Dorsolateral prefrontal cortex (tissue), 120 donors: ENCODE measurements at regions of chr1 and their contacts with region 1.

Region 1: DNA sequence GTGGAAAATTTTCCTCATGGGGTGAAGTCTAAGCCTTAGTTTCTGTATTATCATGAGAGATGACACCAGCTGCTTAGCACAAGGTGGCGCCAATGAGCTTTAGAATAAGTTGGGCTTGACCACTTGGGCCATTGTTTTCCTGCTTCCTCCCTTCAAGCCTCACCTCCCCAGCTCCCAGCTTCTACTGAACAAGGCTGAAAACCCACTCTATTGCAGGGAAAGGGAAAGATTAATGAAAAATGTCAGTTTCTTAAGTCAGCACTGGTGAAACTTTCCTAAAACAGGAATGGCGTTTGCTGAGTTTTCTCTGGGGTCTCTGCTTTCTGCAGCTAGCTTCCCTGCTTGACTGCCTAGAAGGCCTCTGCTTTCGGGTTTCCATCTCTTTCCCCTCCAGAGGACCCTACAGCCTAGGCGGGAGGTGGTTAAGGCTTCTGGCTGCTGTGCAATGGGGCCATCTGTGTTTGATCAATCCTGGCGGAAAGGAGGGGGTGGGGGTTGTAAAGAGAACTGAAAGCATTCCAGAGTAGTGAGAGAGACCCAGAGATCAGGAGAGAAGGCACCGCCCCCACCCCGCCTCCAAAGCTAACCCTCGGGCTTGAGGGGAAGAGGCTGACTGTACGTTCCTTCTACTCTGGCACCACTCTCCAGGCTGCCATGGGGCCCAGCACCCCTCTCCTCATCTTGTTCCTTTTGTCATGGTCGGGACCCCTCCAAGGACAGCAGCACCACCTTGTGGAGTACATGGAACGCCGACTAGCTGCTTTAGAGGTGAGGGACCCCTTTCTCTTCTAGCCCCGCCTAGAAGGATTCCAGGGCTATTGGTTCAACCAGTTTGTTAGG is at the start of gene OLFML3:
- DNase-seq: peak; percentile 54 to 93 (median 77)
- H3K4me3 ChIP-seq: peak within 1 kb of the TSS in 45 of 59 donors; percentile 0 to 52 (median 32)
- H3K27ac ChIP-seq: peak within 1 kb of the TSS in 29 of 59 donors; percentile 8 to 71 (median 41)
- H3K27me3 ChIP-seq: no peaks in the 10 kb centered on the region
- CTCF ChIP-seq: peak; percentile 51 to 84 (median 76)
- total RNA-seq, gene OLFML3: 0.64 to 13.6 (median 5.2) TPM

Region 2: DNA sequence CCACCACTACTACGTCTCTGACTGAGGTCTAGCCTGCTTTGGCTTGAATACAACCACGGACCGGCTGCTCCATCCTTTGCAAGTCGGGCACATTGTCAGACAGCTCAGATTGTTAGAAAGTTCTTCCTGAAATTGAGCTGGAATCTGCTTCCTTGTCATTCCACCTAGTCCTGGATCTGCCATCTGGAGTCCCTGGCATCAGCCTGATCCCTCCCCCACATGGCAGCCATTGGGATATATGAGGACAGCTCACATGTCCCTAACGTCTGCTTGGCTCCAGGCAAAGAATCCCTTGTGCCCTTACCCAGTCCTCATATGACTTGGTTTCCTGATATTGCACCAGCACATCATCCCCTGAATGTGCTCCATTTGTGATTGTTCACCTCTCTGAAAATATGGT is 230.9 kb after region 1 on chr1:
- intact Hi-C with region 1: loop called in 1 of 2 experiments (anchors 5 kb)
- DNase-seq: peak in 2 of 10 donors; percentile 18 to 76
- H3K4me3 ChIP-seq: no peak overlapping the region
- H3K27ac ChIP-seq: no peak overlapping the region
- H3K27me3 ChIP-seq: peaks cover 0 to 5% (median 0%) of the 10 kb centered on the region in 45 donors
- CTCF ChIP-seq: no peak

Region 3: GRCh38 chr1:114282751-114283403 is 303.8 kb after region 1 on chr1:
- intact Hi-C with region 1: loop called (anchors 2 kb)
- DNase-seq: peak; percentile 73 to 93 (median 83)
- H3K4me3 ChIP-seq: no peak overlapping the region
- H3K27ac ChIP-seq: no peak overlapping the region
- H3K27me3 ChIP-seq: no peaks in the 10 kb centered on the region
- CTCF ChIP-seq: peak; percentile 43 to 90 (median 83)

Region 4: DNA sequence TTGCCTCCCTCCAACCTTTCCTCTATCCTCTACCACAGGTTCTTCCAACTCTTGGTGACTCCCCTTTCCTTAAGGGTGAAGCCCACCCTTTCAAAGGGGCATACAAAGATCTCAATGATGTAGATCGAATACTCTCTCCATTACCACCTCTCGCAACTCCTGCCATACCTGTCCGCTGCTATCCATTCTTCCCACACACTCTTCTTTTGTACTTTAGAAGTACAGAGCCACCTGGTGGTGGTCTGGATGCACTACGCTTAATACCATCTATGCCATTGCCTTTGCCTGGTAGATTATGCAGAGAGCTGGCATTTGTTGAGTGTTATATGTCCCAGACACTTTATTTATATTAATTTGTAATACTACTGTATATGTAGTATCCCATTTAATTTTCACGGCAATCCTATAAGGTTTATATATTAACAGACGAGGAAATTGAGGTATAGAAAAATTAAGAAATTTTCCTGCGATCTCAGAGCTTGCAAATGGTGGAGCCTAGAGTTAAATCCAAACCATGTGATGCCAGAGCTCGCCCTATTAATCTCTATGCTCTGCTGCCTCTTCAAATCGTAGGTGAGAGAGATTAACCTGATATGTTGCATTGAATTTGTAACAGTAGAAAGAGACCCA is 1073.5 kb after region 1 on chr1:
- intact Hi-C with region 1: loop called in 1 of 2 experiments (anchors 10 kb)
- DNase-seq: peak in 3 of 10 donors; percentile 18 to 65 (median 65)
- H3K4me3 ChIP-seq: no peak overlapping the region
- H3K27ac ChIP-seq: no peak overlapping the region
- H3K27me3 ChIP-seq: peaks cover 0 to 6% (median 0%) of the 10 kb centered on the region in 45 donors
- CTCF ChIP-seq: peak; percentile 42 to 81 (median 71)